ENCODE measurements at regions of chr10 and their contacts with region 1.

Region 1: DNA sequence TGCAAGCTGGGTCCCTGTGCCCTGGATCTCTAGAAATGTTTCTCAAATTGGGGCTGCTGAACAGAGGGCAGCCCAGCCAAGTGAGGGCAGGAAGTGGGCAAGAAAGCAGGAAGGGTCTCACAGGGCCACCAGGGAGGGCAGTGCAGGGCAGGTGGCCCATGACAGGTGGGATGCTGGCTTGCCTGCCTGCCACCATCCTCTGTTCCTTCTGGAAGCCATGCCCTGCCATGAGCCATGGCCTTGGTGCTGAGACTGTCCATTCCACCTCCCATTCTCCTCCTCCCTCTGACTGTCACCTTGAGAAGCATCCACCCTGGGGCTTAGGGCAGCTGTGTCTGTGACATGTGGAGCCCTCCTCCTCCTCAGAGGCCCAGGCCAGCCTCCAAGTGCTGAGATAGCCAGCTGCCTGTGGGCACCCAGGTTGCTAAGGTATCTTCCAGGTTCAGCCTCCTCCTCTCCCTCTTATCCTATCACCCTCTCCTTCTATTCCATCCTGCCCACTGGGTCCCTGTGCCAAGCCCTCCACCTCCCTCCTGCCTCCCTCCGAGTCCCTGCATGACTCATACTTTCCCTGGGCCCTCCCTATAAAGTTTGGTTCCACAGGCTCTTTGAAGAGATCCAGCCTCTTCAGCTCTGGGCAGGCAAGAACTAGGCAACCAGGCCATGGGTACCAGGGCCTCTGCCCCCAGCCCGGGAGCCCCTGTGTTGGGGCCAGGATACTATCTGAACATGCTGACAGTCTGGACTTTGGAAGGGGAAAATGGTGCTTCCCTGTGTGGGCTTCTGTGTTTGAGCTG is 1.3 kb downstream of the VSIR start:
- DNase-seq: no peak
- H3K4me3 ChIP-seq: peak overlapping the region; percentile 68 to 96 (median 82)
- H3K27ac ChIP-seq: peak overlapping the region; percentile 91 to 99 (median 95)
- H3K4me1 ChIP-seq: peaks cover 59 to 91% (median 60%) of the 10 kb centered on the region in 3 donors
- H3K27me3 ChIP-seq: no peaks in the 10 kb centered on the region
- CTCF ChIP-seq: no peak
- POLR2A ChIP-seq: peak in 3 of 4 donors; percentile 11 to 65 (median 59)

Region 2: DNA sequence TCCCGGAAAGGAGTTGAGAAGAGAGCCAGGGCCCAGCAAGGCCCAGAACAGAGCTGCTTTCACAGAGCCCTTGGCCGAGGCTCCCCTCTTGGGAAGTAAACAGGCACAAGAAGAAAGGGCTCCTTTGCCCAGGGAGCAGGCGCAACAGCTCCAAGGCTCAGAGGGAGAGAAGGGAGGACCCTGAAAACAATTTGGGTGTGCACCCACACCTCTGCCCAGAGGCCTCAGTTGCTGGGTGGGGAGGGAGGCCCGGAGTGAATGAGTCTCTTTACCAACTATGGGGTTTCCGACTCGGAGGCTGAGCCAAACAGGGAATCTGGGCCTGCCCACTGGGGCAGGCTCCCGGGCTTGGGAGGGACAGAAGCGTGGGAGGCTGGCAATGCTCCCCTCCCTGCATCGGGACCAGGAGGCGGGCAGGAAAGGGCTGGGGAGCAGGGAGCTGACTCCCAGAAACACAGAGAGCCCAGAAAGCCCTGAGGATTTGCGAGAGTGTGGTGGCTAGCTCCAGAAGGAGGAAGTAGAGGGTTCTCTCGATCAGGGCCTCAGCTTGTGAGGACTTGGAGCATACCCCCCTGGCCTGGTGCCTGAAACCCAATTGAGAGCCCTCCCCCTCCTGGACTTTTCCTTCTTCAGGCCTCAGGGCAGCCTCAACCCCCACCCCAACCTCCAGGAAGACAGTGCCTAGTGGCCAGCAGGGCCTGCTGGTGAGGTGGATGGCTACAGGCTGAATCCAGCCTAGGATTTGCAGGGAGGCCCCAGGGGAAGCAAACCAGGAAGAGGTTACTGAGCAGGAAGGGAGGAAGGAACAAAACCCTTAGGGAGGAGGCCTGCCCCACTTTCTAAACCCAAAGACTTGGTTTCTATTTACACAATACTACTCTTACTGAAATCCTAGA is 58.6 kb before region 1 on chr10:
- intact Hi-C with region 1: loop called (anchors 5 kb)
- DNase-seq: no peak
- H3K4me3 ChIP-seq: peak overlapping the region in 1 of 4 donors; percentile 37
- H3K27ac ChIP-seq: peak overlapping the region; percentile 87 to 98 (median 94)
- H3K4me1 ChIP-seq: peaks cover 40 to 67% (median 59%) of the 10 kb centered on the region in 3 donors
- H3K27me3 ChIP-seq: no peaks in the 10 kb centered on the region
- CTCF ChIP-seq: peak in 3 of 6 experiments; percentile 18 to 41 (median 30)
- POLR2A ChIP-seq: peak in 1 of 4 donors; percentile 62

Region 3: GRCh38 chr10:71727738-71728737 is 44.0 kb before region 1 on chr10:
- intact Hi-C with region 1: loop called (anchors 5 kb)
- DNase-seq: peak; percentile 53
- H3K4me3 ChIP-seq: peak overlapping the region in 1 of 4 donors; percentile 29
- H3K27ac ChIP-seq: peak overlapping the region; percentile 75 to 94 (median 88)
- H3K4me1 ChIP-seq: peaks cover 47 to 60% (median 52%) of the 10 kb centered on the region in 3 donors
- H3K27me3 ChIP-seq: no peaks in the 10 kb centered on the region
- CTCF ChIP-seq: no peak
- POLR2A ChIP-seq: no peak

Region 4: GRCh38 chr10:71888623-71889387 is 116.8 kb after region 1 on chr10:
- intact Hi-C with region 1: no loop called
- DNase-seq: peak; percentile 50
- H3K4me3 ChIP-seq: peak overlapping the region; percentile 47 to 77 (median 55)
- H3K27ac ChIP-seq: peak overlapping the region; percentile 90 to 98 (median 94)
- H3K4me1 ChIP-seq: peaks cover 9 to 47% (median 15%) of the 10 kb centered on the region in 3 donors
- H3K27me3 ChIP-seq: no peaks in the 10 kb centered on the region
- CTCF ChIP-seq: peak in 1 of 6 experiments; percentile 10
- POLR2A ChIP-seq: peak in 2 of 4 donors; percentile 54 to 63